Activated CD4-positive, alpha-beta memory T cell treated with anti-CD3 and anti-CD28 coated beads, Interleukin-2, amount 10 ng/mL, durations not matched to agents 7 days and 5 days (primary cell): ENCODE measurements at regions of chr20 and their contacts with region 1.

Region 1: DNA sequence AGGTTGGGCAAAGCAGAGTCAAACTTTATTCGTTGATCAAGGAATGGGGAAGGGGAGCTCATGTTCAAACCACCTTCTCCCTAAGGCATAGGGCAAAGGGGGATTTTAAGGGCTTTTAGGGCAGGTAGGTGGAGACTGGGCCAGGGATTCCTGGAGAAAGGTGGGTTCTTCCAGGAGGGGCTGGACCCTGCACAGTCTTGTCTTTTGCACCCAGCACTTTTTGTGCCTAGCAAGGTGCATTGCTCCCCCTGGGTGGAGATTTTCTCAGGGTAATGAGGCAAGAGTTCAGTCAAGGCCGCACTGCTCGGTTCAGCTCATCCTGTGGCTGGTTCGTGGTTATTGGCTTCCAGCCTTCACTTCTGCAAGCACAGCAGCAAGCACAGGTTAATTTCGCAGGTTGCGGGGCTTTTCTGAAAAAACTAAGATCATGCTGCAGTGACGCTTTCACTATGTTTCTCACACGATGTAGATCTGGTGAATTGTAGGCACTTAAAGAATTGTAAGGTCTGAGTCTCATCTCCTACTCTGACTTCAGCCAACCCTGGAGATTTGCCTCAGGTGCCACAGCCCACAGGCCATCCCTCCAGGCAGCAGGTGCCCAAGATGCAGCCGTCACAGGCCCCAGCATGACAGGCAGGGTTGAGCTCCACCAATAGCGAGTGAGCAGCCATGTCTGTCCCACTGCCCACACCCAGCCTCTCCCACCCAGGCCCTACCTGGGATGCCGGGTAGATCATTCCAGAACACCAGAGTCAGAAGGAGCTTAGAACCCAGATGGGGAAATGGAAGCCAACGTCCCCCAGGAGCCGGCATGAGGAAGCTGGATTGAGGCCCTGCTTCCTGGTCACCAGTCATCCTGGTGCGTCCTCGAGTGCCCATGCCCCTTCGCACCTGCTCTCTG is 37.1 kb downstream of the SUN5 start:
- DNase-seq: peak; percentile 80
- H3K4me3 Mint-ChIP-seq: peak overlapping the region; percentile 27
- H3K27ac Mint-ChIP-seq: no peak overlapping the region
- H3K4me1 Mint-ChIP-seq: peaks cover 60% of the 10 kb centered on the region
- H3K27me3 Mint-ChIP-seq: no peaks in the 10 kb centered on the region

Region 2: DNA sequence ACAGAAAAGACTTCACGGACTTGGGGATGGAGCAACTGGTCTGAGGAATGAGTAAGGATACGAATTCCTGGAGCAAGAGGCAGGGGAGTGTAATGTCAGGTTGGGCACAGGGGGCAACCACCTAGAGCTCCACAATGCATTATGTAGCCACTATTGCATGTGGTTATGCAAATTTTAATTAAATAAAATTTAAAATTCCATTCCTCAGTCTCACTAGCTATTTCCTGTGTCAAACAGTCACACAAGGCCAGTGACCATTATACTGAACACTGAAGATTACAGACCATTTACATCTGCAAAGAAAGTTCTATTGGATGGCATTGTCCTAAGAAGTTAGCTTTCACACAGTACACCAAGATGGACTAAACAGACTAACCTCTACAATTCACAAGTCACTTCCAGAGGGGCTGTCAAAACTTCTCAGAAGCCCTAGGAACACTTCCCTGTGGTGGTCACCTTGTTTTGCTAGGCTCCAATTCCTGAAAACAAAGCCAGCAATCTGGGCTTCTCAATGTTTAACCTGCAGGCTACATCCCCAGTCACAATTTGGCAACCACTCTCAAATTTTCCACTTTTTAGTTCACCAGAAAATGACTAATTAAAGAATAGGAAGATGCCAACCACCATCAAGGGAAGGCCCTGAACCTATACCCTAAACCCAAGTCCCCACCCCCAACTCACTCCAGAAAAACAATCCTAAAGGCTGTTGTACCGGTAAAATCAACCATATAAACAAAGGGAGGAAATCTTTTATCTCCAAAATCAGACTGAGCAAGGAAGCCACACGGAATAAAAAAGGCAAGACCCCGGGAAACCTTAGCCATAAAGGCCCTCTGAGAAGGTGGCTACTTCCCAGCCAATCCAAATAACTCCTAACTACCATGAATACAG is 259.2 kb before region 1 on chr20:
- CTCF ChIA-PET with region 1: no interaction called
- POLR2A ChIA-PET with region 1: no interaction called
- DNase-seq: no peak
- H3K4me3 Mint-ChIP-seq: no peak overlapping the region
- H3K27ac Mint-ChIP-seq: no peak overlapping the region
- H3K4me1 Mint-ChIP-seq: peaks cover 6% of the 10 kb centered on the region
- H3K27me3 Mint-ChIP-seq: no peaks in the 10 kb centered on the region

Region 3: GRCh38 chr20:33005132-33005566 is 38.0 kb after region 1 on chr20:
- CTCF ChIA-PET with region 1: interaction called, 12 read pairs
- POLR2A ChIA-PET with region 1: interaction called, 3 read pairs
- DNase-seq: peak; percentile 35
- H3K4me3 Mint-ChIP-seq: no peak overlapping the region
- H3K27ac Mint-ChIP-seq: no peak overlapping the region
- H3K4me1 Mint-ChIP-seq: no peaks in the 10 kb centered on the region
- H3K27me3 Mint-ChIP-seq: no peaks in the 10 kb centered on the region